A549 (cell line): ENCODE measurements at regions of chr10 and their contacts with region 1.

Region 1: DNA sequence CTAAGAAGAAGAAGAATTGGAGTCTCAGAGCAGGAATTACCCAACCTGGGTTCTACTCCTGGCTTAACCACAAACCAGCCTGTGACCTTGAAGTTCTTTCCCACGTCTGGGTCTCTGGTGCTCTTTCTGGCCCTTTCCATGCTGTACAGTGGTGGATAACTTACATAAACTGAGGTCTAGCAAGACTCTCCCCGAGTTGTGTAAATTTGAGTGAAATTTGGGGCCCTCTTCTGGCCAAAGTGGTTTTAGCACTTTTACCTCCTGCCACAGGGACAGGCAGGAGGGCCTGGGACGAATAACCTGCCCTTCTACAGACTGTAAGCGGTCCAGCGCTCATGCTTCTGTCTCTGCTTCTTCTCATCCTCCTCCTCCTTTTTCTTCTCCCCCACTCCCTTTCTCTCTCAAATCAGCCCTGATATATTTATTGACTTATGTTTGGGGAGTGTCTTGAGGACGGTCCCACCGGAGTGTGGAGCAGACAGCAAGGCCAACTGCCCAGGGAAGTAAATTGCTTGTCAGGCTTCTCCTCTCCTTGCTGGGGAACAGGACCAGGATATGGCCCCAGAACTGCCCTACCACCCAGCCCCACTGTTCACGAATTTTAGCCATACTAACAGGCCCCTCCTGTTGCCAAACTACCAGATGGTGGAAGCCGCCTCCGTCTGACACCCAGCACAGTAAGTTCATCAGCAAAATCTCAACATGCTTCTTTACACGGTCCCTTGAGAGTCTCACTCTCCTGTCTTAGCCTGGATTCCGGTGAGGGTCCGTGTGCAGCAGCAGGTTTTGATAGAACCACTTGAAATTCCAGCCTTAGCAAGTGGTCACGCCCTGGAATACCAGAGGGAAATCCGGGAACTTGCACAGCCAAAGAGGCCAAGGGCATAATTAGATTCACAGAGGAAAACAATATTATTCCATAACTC is 4.0 kb upstream of the SH3PXD2A start:
- DNase-seq: peak; percentile 68 to 69
- ATAC-seq: peak; percentile 75 to 89
- H3K4me3 ChIP-seq: no peak overlapping the region
- H3K27ac ChIP-seq: peak overlapping the region in 1 of 2 experiments; percentile 56; a peak in 3 of 6 replicates
- H3K4me1 ChIP-seq: peaks cover 29% of the 10 kb centered on the region
- CTCF ChIP-seq: peak; percentile 80
- EP300 ChIP-seq: no peak
- POLR2A ChIP-seq: no peak
- RAD21 ChIP-seq: peak; percentile 79 to 89

Region 2: GRCh38 chr10:103752680-103753248 is 106.7 kb before region 1 on chr10:
- CTCF ChIA-PET with region 1: interaction called, 28 read pairs
- POLR2A ChIA-PET with region 1: no interaction called
- DNase-seq: peak in 1 of 2 experiments; percentile 35
- ATAC-seq: no peak
- H3K4me3 ChIP-seq: no peak overlapping the region
- H3K27ac ChIP-seq: no peak overlapping the region
- H3K4me1 ChIP-seq: peaks cover 14% of the 10 kb centered on the region
- CTCF ChIP-seq: peak; percentile 63
- EP300 ChIP-seq: no peak
- POLR2A ChIP-seq: no peak
- RAD21 ChIP-seq: peak; percentile 19 to 20; a peak in 2 of 5 replicates

Region 3: GRCh38 chr10:103845972-103846371 is 13.5 kb before region 1 on chr10:
- CTCF ChIA-PET with region 1: interaction called, 10 read pairs
- POLR2A ChIA-PET with region 1: no interaction called
- DNase-seq: no peak
- ATAC-seq: no peak
- H3K4me3 ChIP-seq: no peak overlapping the region
- H3K27ac ChIP-seq: no peak overlapping the region
- H3K4me1 ChIP-seq: no peaks in the 10 kb centered on the region
- CTCF ChIP-seq: no peak
- EP300 ChIP-seq: no peak
- POLR2A ChIP-seq: no peak
- RAD21 ChIP-seq: no peak

Region 4: DNA sequence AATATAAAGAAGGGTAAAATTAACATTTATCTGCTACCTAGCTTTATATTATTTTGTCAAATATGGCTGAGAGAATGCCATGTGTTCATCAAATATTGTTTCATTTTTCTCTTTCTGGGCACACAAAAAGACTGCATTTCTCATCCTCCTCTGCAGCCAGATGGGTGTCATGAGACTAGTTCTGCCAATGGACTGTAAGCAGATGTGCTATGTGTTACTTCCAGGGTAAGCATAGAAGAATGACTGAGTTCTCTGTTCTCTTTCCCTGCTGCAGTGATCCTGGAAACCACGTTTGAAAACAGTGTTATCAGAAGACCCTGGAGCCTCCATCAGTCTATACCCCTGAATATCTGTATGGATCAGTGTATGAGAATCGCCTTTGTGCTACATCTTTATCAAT is 83.4 kb after region 1 on chr10:
- CTCF ChIA-PET with region 1: no interaction called
- POLR2A ChIA-PET with region 1: no interaction called
- DNase-seq: no peak
- ATAC-seq: no peak
- H3K4me3 ChIP-seq: no peak overlapping the region
- H3K27ac ChIP-seq: no peak overlapping the region
- H3K4me1 ChIP-seq: no peaks in the 10 kb centered on the region
- CTCF ChIP-seq: no peak
- EP300 ChIP-seq: no peak
- POLR2A ChIP-seq: no peak
- RAD21 ChIP-seq: no peak

Region 5: GRCh38 chr10:104666106-104666505 is 806.7 kb after region 1 on chr10:
- CTCF ChIA-PET with region 1: no interaction called
- POLR2A ChIA-PET with region 1: no interaction called
- DNase-seq: no peak
- ATAC-seq: no peak
- H3K4me3 ChIP-seq: no peak overlapping the region
- H3K27ac ChIP-seq: no peak overlapping the region
- H3K4me1 ChIP-seq: no peaks in the 10 kb centered on the region
- CTCF ChIP-seq: no peak
- EP300 ChIP-seq: no peak
- POLR2A ChIP-seq: no peak
- RAD21 ChIP-seq: no peak